Upper lobe of right lung (tissue), 1 donor: ENCODE measurements at regions of chr22 and their contacts with region 1.

Region 1: DNA sequence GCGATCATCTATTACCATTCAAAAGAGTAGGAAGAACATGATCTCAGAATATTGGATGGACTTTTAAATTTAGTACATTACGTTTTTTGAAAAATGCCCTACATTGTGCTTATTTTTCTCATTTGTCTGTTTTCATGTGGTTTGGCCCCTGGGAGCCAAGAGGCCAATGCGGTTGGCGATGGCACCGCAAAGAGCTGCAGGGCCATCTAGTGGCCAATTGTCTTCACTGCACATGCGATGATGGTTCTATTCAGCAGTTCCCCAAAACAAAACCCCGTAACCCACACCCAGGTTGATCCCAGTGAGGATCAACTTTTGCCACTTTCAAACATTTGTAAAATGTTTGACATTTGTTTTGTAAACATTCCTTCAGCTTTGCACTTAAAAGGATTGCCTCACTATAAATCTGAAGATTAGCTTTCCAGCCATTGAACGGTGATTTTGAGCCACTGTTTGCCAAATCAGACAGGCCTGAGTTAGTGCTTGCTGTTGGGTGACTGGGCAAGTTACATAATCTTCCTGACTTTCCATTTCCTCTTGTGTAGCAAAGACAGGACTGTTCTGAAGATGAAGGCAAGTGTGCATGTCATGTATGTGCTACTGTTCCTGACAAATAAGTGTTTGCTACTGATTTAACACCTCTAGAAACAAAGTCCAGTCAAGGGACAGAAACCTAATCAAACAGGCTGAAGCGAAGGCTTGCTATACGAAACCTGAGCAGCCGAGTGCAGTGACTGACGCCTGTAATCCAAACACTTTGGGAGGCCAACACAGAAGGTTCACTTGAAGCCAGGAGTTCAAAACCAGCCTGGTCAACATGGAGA is 29.2 kb upstream of the XBP1 start:
- DNase-seq: peak; percentile 83
- ATAC-seq: peak; percentile 98
- H3K4me3 ChIP-seq: no peak overlapping the region
- H3K27ac ChIP-seq: no peak overlapping the region
- H3K4me1 ChIP-seq: peaks cover 11% of the 10 kb centered on the region
- H3K27me3 ChIP-seq: no peaks in the 10 kb centered on the region
- CTCF ChIP-seq: peak; percentile 99

Region 2: DNA sequence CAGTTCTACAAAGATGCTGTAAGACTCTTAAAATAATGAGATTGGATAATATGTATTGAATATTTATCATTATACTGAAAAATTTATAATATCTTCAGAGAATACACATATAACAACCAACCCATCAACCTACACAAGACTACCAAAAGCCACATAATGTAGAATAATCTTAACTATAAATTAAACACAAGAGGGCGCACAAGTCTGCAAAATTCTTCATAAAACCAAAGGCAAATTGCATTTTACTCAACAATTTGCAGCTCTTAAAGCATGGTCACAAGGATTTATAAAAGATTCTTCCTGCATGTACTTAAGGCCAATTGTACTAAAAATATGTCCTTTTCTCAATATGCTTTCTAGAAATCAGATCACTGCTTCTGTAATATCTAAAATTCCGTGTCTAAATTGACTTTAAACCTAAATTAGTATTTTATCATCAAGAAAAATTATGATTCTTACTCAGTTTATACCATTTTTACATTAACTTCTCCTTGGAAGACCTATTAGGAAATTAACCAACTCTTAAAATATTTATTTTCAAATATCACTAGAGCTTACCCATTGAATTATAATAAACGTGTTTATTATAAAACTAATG is 228.9 kb before region 1 on chr22:
- intact Hi-C with region 1: loop called (anchors 5 kb)
- DNase-seq: no peak
- ATAC-seq: peak; percentile 54
- H3K4me3 ChIP-seq: no peak overlapping the region
- H3K27ac ChIP-seq: no peak overlapping the region
- H3K4me1 ChIP-seq: no peaks in the 10 kb centered on the region
- H3K27me3 ChIP-seq: no peaks in the 10 kb centered on the region
- CTCF ChIP-seq: peak; percentile 61